OCI-LY7 (cell line): ENCODE measurements at regions of chr10 and their contacts with region 1.

Region 1: DNA sequence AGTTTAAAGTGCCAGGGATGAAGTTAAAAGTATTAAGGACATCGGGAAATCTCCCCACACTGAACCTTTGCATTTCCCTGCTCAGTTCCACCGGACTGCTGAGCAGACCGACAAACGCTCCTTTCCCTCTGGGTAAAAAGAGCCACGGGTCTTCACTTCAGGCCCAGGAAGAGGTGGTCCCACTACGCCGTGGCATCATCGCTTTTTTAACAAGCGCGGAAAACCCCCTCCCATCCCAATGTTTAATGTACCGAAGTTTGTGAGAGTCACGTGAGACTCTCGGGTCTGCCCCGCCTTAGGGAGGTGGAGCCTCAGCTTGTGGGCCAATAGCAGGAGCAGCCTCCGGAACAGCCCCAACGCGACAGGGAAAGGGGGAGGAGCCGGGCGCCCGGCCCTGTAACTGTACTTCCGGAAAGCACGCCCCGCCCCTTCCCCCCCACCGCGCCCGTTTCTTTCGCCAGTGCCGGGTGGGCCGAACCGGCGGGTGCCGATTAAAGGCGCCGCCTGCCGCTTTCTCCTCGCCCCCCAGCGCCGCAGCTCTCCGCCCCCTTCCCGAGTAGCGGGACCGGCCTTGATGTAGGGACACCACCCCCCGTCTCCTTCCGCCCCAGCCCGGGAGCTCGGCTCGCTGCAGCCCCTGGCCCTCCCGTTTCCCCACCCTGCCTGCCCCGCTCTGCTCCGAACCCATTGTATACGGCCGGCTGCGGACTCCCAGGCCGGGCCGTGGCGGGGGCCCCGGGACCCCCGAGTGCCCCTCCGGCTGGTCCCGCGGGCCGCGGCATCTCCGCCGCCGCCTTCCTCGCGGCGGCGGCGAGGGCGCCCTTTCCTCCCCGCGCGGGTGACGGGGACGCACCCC is 2.2 kb upstream of the TRIM8 start:
- DNase-seq: peak; percentile 98
- H3K4me3 ChIP-seq: peak overlapping the region; percentile 84
- H3K27ac ChIP-seq: peak overlapping the region; percentile 95
- H3K4me1 ChIP-seq: peaks cover 11% of the 10 kb centered on the region
- CTCF ChIP-seq: no peak

Region 2: DNA sequence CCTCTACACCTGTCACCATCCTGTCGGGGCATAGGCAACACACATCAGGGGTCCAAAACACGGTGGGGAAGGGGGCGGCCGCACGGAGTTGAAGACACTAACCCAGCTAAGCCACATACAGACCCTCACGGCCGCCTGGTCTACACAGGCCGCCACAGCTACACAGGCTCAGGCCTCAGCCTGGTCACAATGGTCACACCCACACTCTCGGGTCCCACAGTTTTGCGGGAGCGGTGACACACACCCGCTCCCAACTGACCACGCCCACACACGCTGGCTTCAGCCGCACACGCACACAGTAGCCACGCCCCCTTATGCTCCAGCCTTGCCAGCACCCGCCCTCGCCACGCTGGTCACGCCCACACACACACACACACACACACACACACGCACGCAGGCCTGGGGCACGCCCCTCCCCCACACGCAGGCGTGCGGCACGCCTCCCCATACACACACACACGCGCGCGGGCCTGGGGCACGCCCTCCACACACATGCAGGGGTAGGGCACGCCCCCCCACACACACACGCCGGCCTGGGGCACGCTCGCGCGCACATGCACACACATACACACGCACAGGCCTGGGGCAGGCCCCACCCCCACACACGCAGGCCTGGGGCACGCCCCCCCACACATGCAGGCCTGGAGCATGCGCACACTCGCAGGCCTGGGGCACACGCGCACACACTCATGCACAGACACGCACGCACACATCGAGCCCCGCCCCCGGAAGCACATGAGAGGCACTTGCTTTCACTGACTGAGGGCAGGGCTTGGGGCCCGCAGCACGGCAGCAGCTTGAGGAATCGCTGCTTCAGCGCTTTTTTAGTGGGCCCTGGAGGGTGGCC is 811.6 kb before region 1 on chr10:
- CTCF ChIA-PET with region 1: no interaction called
- POLR2A ChIA-PET with region 1: no interaction called
- intact Hi-C with region 1: loop called (anchors 5 kb)
- DNase-seq: peak; percentile 92
- H3K4me3 ChIP-seq: peak overlapping the region; percentile 65
- H3K27ac ChIP-seq: peak overlapping the region; percentile 87
- H3K4me1 ChIP-seq: peaks cover 38% of the 10 kb centered on the region
- CTCF ChIP-seq: no peak

Region 3: GRCh38 chr10:102450194-102450938 is 191.7 kb before region 1 on chr10:
- CTCF ChIA-PET with region 1: no interaction called
- POLR2A ChIA-PET with region 1: interaction called, 5 read pairs
- intact Hi-C with region 1: loop called (anchors 5 kb)
- DNase-seq: peak; percentile 94
- H3K4me3 ChIP-seq: peak overlapping the region; percentile 96
- H3K27ac ChIP-seq: peak overlapping the region; percentile 83
- H3K4me1 ChIP-seq: peaks cover 33% of the 10 kb centered on the region
- CTCF ChIP-seq: no peak

Region 4: DNA sequence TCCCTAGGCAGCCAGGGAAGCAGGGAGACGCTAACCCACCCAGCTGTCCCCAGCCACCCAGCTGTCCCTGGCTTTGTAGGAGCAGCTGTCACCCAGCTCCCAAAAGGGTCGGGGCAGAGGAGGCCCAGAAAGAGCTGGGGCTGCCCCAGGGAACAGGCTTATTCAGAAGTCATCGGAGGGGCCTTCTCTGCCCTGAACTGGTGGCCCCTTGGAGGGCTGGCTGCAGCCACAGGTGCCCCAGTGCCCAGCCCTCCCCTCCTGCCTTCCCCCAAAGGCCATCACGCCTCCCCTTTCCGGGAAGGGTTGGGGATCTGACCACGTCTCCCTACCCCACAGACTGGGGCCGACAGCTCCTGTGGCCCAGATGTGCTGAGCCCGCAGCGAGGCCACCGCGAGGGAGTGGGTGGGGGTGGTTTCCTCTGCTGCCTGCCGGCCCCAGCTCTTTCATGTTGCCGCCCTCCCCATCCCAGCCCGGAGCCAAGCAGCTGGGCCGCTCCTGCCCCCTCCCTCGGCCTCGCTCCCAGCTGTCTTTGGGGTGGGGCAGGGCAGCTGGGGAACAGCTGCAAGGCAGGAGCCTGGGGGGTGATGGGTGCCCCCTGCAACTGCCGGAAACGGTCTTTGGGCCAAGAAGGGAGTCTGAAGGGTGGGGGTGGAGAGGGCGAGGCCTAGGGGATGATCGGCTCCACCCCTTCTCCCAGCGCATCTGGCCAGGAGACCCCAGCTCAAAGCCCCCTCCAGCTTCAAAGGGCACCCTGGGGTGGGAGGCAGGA is 19.0 kb after region 1 on chr10:
- CTCF ChIA-PET with region 1: no interaction called
- POLR2A ChIA-PET with region 1: interaction called, 11 read pairs
- intact Hi-C with region 1: loop called (anchors 1 kb)
- DNase-seq: peak; percentile 94
- H3K4me3 ChIP-seq: peak overlapping the region; percentile 35
- H3K27ac ChIP-seq: peak overlapping the region; percentile 80
- H3K4me1 ChIP-seq: peaks cover 44% of the 10 kb centered on the region
- CTCF ChIP-seq: no peak

Region 5: DNA sequence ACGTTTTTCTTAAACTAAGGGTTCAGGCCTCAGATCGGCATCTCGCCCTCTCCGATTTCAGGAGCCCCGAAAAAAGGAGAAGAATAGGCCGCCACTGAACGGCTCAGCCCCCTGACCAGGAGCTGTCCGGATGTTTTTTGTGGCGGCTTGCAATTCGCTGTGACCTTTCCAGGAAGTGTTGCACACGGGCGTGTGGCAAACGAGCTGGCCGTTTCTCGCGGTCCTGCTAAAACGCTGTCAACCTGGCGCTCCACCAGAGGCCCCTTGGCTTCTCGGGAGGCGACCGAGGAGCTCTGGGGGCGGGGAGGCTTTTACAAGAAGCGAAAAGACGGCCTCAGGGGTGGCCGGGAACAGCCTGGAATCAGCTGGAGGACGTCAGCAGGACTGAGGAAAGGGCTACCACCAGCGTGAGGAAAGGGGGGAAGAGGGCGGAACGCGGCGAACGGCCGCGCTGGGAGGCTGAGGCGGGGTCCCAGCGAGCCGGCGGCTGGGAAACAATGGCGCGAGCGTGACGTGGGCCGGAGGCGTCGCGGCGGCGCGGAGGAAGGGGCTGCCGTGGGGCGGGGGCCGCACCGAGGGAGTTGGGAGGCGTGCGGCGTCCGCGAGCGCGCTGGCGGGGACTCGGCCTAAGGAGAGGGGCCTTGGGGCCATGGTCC is 550.5 kb after region 1 on chr10:
- CTCF ChIA-PET with region 1: no interaction called
- POLR2A ChIA-PET with region 1: interaction called, 3 read pairs
- intact Hi-C with region 1: loop called (anchors 5 kb)
- DNase-seq: peak; percentile 91
- H3K4me3 ChIP-seq: peak overlapping the region; percentile 91
- H3K27ac ChIP-seq: peak overlapping the region; percentile 77
- H3K4me1 ChIP-seq: peaks cover 43% of the 10 kb centered on the region
- CTCF ChIP-seq: no peak